GM12878 (cell line): ENCODE measurements at regions of chr6 and their contacts with region 1.

Region 1: DNA sequence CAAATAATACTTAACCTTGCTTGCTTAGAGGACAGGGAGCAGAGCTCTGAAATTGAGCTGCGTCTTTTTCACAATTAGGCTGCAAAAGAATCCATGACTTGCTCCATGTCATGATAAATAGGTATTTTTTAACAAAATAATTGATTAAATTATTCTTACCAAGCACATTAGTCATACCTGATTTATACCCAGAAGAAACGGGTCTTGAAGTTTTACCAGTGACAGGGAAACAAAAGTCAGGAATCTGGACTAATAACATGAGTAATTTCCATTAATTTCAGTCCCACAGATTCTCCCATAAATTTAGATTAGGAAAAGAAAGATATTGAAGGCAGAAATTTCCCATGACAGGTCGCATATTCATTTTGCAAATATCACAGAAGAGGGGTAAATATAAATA is 85.0 kb upstream of the BMP5 start:
- DNase-seq: no peak
- ATAC-seq: no peak
- H3K4me3 ChIP-seq: no peak overlapping the region
- H3K27ac ChIP-seq: no peak overlapping the region
- H3K4me1 ChIP-seq: no peaks in the 10 kb centered on the region
- H3K27me3 ChIP-seq: no peaks in the 10 kb centered on the region
- CTCF ChIP-seq: no peak
- EP300 ChIP-seq: no peak
- POLR2A ChIP-seq: no peak
- RAD21 ChIP-seq: no peak

Region 2: DNA sequence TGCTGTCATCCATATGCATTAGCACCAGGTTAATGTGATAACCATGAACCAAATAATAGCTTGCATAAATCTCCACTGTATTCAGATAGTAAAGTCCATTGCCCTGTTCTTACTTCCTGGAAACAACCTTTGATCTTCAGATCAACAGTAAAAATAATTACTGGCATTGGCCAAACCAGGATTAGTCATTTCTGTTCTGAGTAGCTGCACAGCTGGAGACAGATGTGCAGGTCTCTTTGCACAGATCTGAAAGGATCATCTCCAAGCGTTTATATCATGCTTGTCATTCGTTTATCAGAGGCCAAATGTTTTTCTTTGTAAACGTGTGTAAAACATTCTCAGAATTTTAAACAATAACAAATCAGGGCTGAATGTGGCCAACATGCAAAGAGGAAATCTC is 246.9 kb before region 1 on chr6:
- CTCF ChIA-PET with region 1: no interaction called
- POLR2A ChIA-PET with region 1: no interaction called
- RAD21 ChIA-PET with region 1: no interaction called
- SMC1A ChIA-PET with region 1: no interaction called
- in situ Hi-C with region 1: no loop called
- intact Hi-C with region 1: no loop called
- DNase-seq: no peak
- ATAC-seq: peak; percentile 50; the same call in 2 of the 3 replicates
- H3K4me3 ChIP-seq: no peak overlapping the region
- H3K27ac ChIP-seq: no peak overlapping the region
- H3K4me1 ChIP-seq: no peaks in the 10 kb centered on the region
- H3K27me3 ChIP-seq: no peaks in the 10 kb centered on the region
- CTCF ChIP-seq: no peak
- EP300 ChIP-seq: no peak
- POLR2A ChIP-seq: no peak
- RAD21 ChIP-seq: no peak

Region 3: DNA sequence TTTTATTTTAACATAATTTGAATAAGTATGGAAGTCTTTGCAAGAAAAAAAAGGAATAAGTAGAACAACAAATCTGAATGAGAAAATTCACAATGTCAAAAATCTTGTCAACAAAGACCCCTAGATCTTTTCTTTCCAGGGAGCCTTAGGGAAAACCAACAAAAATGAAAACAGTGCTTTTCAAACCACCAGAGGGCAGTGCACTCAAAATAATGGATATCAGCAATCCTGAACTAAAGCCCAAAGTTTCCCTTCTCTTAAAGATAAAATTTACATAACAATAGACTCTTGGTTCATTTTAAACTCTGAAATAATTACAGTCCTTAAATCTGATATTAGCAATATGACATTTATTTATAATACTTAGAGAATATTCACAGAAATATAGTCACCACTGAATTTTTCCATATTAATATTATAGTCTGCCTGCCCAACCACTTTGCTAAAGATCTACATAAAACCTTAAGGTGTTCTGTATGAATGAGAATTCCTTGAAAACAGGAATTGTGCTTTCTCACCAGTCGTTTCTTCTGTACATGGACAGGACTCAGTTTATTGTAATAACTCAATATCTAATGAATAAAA is 20.4 kb after region 1 on chr6:
- CTCF ChIA-PET with region 1: no interaction called
- POLR2A ChIA-PET with region 1: no interaction called
- RAD21 ChIA-PET with region 1: no interaction called
- SMC1A ChIA-PET with region 1: no interaction called
- in situ Hi-C with region 1: no loop called
- intact Hi-C with region 1: loop called (anchors 1 kb)
- DNase-seq: no peak
- ATAC-seq: no peak
- H3K4me3 ChIP-seq: no peak overlapping the region
- H3K27ac ChIP-seq: no peak overlapping the region
- H3K4me1 ChIP-seq: no peaks in the 10 kb centered on the region
- H3K27me3 ChIP-seq: no peaks in the 10 kb centered on the region
- CTCF ChIP-seq: peak; percentile 32 to 42 (median 35); a peak in 4 of 6 replicates
- EP300 ChIP-seq: no peak
- POLR2A ChIP-seq: no peak
- RAD21 ChIP-seq: peak; percentile 62

Region 4: DNA sequence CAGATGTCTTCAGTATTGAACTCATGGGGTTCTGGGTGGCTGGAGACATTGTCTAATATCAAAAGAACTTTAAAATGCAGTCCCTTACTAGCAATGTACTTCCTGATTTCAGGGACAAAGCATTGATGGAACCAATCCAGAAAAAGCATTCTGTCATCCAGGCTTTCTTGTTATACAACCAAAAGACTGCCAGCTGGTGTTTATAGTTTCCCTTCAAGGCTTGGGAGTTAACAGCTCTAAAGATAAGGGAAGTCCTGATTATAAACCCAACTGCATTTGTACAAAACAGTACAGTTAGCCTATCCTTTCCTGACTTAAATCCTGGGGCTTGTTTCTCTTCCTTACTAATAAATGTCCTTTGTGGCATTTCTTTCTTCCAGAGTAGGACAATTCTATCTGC is 127.1 kb after region 1 on chr6:
- CTCF ChIA-PET with region 1: no interaction called
- POLR2A ChIA-PET with region 1: no interaction called
- RAD21 ChIA-PET with region 1: no interaction called
- SMC1A ChIA-PET with region 1: no interaction called
- in situ Hi-C with region 1: no loop called
- intact Hi-C with region 1: no loop called
- DNase-seq: no peak
- ATAC-seq: no peak
- H3K4me3 ChIP-seq: no peak overlapping the region
- H3K27ac ChIP-seq: no peak overlapping the region
- H3K4me1 ChIP-seq: no peaks in the 10 kb centered on the region
- H3K27me3 ChIP-seq: no peaks in the 10 kb centered on the region
- CTCF ChIP-seq: no peak
- EP300 ChIP-seq: no peak
- POLR2A ChIP-seq: no peak
- RAD21 ChIP-seq: no peak